Thyroid gland (tissue), 4 donors: ENCODE measurements at regions of chr3 and their contacts with region 1.

Region 1: DNA sequence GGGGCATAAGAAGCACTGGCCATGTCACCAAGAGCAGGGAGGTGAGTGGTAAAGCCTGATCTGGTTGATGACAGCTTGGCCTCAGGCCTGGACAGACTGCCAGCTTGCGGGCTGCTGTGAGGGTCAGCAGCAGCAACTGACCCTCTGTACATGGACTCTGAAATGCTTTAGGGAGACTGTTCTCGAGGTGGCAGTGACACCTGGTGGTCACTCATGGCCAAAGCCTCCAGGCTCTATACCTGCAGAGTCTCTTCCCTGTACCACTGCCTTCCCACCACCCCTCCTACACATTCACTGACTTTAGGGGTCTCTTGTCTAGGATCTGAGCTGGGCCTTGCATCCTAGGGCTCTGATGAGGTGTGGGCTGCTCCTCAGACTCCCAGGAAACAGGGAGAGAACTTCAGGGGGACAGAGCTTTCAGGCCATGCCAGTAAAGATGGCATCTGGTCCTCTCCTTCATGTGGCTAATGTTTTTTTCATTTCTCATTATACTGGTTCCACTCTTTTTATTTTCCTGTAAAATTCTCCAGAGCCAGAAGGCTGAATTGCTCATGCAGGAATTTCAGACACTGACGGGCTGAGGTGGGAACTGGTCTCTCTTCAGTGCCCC is 17.2 kb upstream of the TIMP4 start:
- DNase-seq: peak; percentile 63 to 75
- H3K4me3 ChIP-seq: no peak overlapping the region
- H3K27ac ChIP-seq: no peak overlapping the region
- H3K4me1 ChIP-seq: peaks cover 20 to 31% of the 10 kb centered on the region in 2 donors
- H3K27me3 ChIP-seq: no peaks in the 10 kb centered on the region
- CTCF ChIP-seq: peak; percentile 55 to 89 (median 78)
- POLR2A ChIP-seq: no peak

Region 2: DNA sequence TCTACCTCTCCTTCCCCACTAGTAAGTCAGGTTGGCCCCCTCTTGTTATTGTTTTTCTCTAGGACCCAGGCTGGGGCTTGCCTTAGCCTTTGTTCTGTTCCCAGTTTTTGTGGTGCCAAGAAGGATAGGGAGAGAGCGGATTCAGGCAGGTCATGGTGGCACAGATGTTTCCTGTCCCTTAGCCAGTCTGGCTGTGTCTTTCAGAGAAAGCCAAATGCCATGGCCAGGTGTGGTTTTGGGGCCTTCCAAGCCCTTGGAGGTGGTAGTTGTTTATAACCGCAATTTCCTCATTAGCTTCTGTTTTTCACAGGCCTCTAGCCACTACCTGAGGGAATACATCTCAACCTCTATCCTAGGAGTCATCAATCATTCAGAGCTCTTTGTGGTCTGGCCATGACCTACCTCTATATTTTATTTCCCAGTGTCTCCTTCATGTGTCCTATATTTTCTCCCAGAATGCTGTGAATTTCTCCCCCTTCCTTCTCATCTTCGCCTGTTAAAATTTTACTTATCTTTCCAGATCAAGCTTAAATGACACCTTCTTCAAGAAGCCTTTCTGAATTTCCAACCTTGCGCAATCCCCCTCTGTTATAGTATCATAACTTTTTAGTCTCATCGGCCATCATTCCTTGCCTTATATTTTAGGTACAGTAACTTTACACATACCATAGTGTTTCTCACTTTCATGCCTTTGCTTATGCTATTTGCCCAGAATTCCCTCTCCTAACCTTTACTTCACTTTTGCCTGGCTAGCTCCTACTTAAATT is 55.4 kb before region 1 on chr3:
- intact Hi-C with region 1: no loop called
- DNase-seq: peak in 1 of 2 donors; percentile 9
- H3K4me3 ChIP-seq: no peak overlapping the region
- H3K27ac ChIP-seq: no peak overlapping the region
- H3K4me1 ChIP-seq: no peaks in the 10 kb centered on the region
- H3K27me3 ChIP-seq: no peaks in the 10 kb centered on the region
- CTCF ChIP-seq: no peak
- POLR2A ChIP-seq: no peak

Region 3: DNA sequence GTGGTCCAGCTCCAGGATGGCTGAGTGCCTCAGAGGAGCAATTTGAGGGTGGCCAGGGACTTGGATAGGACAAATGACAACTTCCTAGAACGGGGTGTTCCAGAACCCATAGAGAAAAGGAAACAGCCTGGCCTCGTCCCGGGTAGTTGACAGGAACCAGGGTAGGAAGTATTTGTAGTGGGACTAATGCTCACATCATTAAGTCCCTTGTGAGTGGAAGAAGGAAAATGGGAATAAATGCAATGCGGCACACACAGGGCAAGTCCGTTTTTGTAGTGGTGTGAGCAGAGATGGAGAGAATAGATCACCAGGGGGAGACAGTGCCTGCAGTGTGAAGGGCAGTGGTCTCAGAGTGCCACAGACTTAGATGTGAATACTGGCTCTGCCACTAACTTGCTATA is 36.8 kb before region 1 on chr3:
- intact Hi-C with region 1: loop called (anchors 2 kb)
- DNase-seq: peak; percentile 9 to 21
- H3K4me3 ChIP-seq: no peak overlapping the region
- H3K27ac ChIP-seq: peak overlapping the region in 1 of 3 donors; percentile 3
- H3K4me1 ChIP-seq: peaks cover 0 to 3% of the 10 kb centered on the region in 2 donors
- H3K27me3 ChIP-seq: no peaks in the 10 kb centered on the region
- CTCF ChIP-seq: peak in 4 of 6 experiments; percentile 19 to 50 (median 44)
- POLR2A ChIP-seq: no peak

Region 4: DNA sequence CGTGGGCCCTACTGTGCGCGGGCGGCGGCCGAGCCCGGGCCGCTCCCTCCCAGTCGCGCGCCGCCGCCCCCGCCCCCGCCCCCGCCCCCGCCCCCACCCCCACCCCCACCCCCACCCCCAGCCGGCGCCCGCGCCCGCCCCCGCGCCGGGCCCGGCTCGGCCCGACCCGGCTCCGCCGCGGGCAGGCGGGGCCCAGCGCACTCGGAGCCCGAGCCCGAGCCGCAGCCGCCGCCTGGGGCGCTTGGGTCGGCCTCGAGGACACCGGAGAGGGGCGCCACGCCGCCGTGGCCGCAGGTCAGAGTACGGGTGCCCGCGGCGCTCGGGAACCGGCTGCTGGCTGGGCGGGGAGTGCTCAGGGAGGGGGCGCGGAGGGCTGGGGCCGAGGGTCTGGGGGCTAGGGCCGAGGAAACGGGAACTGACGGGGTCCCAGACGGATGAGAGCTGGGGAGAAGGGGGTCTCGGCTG is 111.8 kb after region 1 on chr3:
- intact Hi-C with region 1: loop called (anchors 10 kb)
- DNase-seq: peak; percentile 51 to 68
- H3K4me3 ChIP-seq: peak overlapping the region; percentile 57 to 97 (median 81)
- H3K27ac ChIP-seq: peak overlapping the region; percentile 60 to 92 (median 74)
- H3K4me1 ChIP-seq: peaks cover 0 to 5% of the 10 kb centered on the region in 2 donors
- H3K27me3 ChIP-seq: no peaks in the 10 kb centered on the region
- CTCF ChIP-seq: no peak
- POLR2A ChIP-seq: peak in 1 of 2 donors; percentile 28